ENCODE measurements at regions of chr11 and their contacts with region 1.

Region 1: DNA sequence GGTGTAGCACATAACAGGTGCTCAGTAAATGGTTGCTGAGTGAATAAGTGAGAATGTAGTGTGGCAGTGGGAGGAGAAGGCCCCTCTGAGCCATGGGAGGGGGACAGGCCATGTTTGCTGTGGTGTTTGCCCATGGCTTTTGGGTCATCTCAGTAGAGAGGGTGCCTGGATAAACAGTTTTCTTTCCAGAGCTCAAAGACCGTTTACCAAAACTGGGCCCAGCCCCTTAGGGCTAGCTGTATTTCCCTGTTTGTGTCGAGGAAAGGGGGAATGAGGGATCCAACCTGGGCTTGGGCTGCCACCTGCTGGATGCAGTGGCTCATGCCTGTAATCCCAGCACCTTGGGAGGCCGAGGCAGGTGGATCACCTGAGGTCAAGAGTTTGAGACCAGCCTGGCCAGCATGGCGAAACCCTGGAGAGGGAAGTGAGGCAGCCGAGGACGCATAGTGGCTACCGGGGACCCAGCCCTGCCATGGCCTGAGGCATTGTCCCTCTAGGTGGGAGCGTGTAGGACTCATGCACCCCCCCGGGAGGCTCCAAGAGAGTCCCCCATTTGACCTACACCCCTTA is 8.7 kb upstream of the LTO1 start:
- DNase-seq: no peak
- H3K4me3 ChIP-seq: no peak overlapping the region
- CTCF ChIP-seq: no peak
- POLR2A ChIP-seq: no peak

Region 2: GRCh38 chr11:69909561-69910496 is 226.0 kb after region 1 on chr11:
- intact Hi-C with region 1: loop called (anchors 5 kb)
- DNase-seq: peak in 1 of 2 donors; percentile 79
- H3K4me3 ChIP-seq: no peak overlapping the region
- CTCF ChIP-seq: no peak
- POLR2A ChIP-seq: no peak

Region 3: GRCh38 chr11:70191495-70192140 is 507.8 kb after region 1 on chr11:
- intact Hi-C with region 1: loop called (anchors 10 kb)
- DNase-seq: no peak
- H3K4me3 ChIP-seq: no peak overlapping the region
- CTCF ChIP-seq: peak in 1 of 3 donors; percentile 51
- POLR2A ChIP-seq: no peak

Measured in lower leg skin (tissue), 4 donors.